Esophagus muscularis mucosa (tissue), 4 donors: ENCODE measurements at regions of chr10 and their contacts with region 1.

Region 1: GRCh38 chr10:121598207-121598862 is at the start of gene FGFR2:
- DNase-seq: no peak
- H3K4me3 ChIP-seq: peak within 1 kb of the TSS; percentile 70 to 85 (median 73)
- H3K27ac ChIP-seq: peak within 1 kb of the TSS; percentile 91 to 95 (median 94)
- H3K4me1 ChIP-seq: peaks cover 14 to 53% (median 51%) of the 10 kb centered on the region in 4 donors
- H3K27me3 ChIP-seq: peaks cover 0 to 24% (median 2%) of the 10 kb centered on the region in 4 donors
- CTCF ChIP-seq: peak in 1 of 3 experiments; percentile 2
- EP300 ChIP-seq: no peak
- POLR2A ChIP-seq: no peak
- total RNA-seq, gene FGFR2: 58.6 to 74.0 (median 60.5) TPM

Region 2: DNA sequence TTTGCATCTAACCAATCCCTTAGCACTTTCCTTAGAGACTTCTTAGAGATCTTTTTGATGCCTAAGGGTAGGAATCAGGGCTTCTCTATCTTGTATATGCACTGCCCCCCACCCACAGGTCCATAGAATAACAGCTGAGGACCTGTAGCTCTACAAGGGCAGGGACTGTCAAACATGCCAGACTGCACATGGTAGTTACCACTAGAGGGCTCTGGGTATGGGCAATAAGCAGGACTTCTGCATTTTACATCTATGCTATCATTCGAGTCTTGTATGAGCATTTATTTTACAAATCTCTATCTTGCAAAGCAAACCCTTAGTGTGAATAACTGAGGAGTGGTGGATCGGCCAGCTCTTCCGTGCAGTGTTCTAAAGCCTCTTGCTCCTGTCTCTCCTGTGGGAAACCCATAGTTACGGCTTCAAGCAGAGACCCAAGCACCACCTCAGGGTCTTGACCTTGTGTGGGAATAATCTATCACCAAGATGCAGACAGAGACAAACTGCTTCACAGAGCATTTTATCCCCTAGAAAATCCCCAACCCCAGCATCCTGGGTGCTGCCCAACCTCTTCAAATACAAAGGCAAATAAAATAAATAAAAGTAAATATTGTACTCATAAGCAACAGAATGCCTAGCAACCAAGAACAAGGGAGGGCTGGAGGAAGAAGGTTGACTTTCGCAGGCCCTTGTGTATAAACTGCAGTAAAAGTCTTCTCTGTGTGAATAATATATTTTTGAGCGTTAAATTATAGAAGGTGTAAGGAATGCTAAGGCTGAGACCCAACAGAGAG is 527.9 kb before region 1 on chr10:
- intact Hi-C with region 1: loop called (anchors 10 kb)
- DNase-seq: no peak
- H3K4me3 ChIP-seq: no peak overlapping the region
- H3K27ac ChIP-seq: peak overlapping the region; percentile 61 to 74 (median 70)
- H3K4me1 ChIP-seq: peaks cover 0 to 61% (median 29%) of the 10 kb centered on the region in 4 donors
- H3K27me3 ChIP-seq: no peaks in the 10 kb centered on the region
- CTCF ChIP-seq: peak; percentile 26 to 40 (median 31)
- EP300 ChIP-seq: no peak
- POLR2A ChIP-seq: no peak

Region 3: GRCh38 chr10:121437596-121437995 is 160.7 kb before region 1 on chr10:
- intact Hi-C with region 1: loop called (anchors 10 kb)
- DNase-seq: no peak
- H3K4me3 ChIP-seq: no peak overlapping the region
- H3K27ac ChIP-seq: peak overlapping the region in 3 of 4 donors; percentile 7 to 38 (median 36)
- H3K4me1 ChIP-seq: peaks cover 4 to 34% (median 27%) of the 10 kb centered on the region in 4 donors
- H3K27me3 ChIP-seq: no peaks in the 10 kb centered on the region
- CTCF ChIP-seq: peak in 1 of 3 experiments; percentile 9
- EP300 ChIP-seq: no peak
- POLR2A ChIP-seq: no peak